Activated CD4-positive, alpha-beta T cell treated with anti-CD3 and anti-CD28 coated beads for 36 hours (primary cell): ENCODE measurements at regions of chr15 and their contacts with region 1.

Region 1: GRCh38 chr15:74460871-74461846 is at the start of gene UBL7:
- DNase-seq: peak; percentile 99
- ATAC-seq: peak; percentile 97
- H3K4me3 Mint-ChIP-seq: peak within 1 kb of the TSS; percentile 96
- H3K27ac Mint-ChIP-seq: peak within 1 kb of the TSS; percentile 97
- H3K4me1 Mint-ChIP-seq: peaks cover 47% of the 10 kb centered on the region
- H3K27me3 Mint-ChIP-seq: no peaks in the 10 kb centered on the region
- total RNA-seq, gene UBL7: 47.5 to 48.6 TPM

Region 2: DNA sequence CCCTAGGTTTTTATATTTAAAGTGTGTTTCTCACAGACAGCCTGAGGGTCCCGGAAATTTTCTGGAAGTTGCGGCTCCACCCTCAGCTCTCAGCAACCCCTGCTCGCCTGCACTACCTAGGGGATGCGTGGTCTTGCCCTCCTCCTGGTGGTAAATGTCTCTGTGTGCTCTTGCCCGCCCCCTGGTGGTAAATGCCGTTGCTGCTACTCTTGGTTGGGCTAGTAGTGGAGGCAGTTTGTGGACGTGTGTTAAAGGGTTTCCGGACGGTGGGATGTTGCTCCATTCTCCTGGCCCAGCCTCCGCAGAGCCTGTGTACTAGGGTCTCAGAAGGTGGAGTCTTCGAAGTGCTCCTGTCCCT is 496.4 kb before region 1 on chr15:
- CTCF ChIA-PET with region 1: no interaction called
- POLR2A ChIA-PET with region 1: no interaction called
- intact Hi-C with region 1: loop called in 1 of 2 experiments (anchors 5 kb)
- DNase-seq: peak; percentile 93
- ATAC-seq: peak; percentile 74
- H3K4me3 Mint-ChIP-seq: peak overlapping the region; percentile 66
- H3K27ac Mint-ChIP-seq: peak overlapping the region; percentile 76
- H3K4me1 Mint-ChIP-seq: peaks cover 27% of the 10 kb centered on the region
- H3K27me3 Mint-ChIP-seq: no peaks in the 10 kb centered on the region

Region 3: GRCh38 chr15:74127260-74127953 is 333.8 kb before region 1 on chr15:
- CTCF ChIA-PET with region 1: no interaction called
- POLR2A ChIA-PET with region 1: no interaction called
- intact Hi-C with region 1: no loop called
- DNase-seq: peak; percentile 94
- ATAC-seq: peak; percentile 96
- H3K4me3 Mint-ChIP-seq: peak overlapping the region; percentile 21
- H3K27ac Mint-ChIP-seq: no peak overlapping the region
- H3K4me1 Mint-ChIP-seq: peaks cover 19% of the 10 kb centered on the region
- H3K27me3 Mint-ChIP-seq: peaks cover 60% of the 10 kb centered on the region

Region 4: GRCh38 chr15:74382004-74382816 is 78.9 kb before region 1 on chr15:
- CTCF ChIA-PET with region 1: interaction called, 3 read pairs
- POLR2A ChIA-PET with region 1: no interaction called
- intact Hi-C with region 1: loop called (anchors 1 to 2 kb)
- DNase-seq: peak; percentile 87
- ATAC-seq: peak; percentile 13
- H3K4me3 Mint-ChIP-seq: no peak overlapping the region
- H3K27ac Mint-ChIP-seq: peak overlapping the region; percentile 97
- H3K4me1 Mint-ChIP-seq: peaks cover 80% of the 10 kb centered on the region
- H3K27me3 Mint-ChIP-seq: no peaks in the 10 kb centered on the region

Region 5: GRCh38 chr15:74438721-74439316 is 22.3 kb before region 1 on chr15:
- CTCF ChIA-PET with region 1: interaction called, 7 read pairs
- POLR2A ChIA-PET with region 1: no interaction called
- intact Hi-C with region 1: loop called in 1 of 2 experiments (anchors 1 kb)
- DNase-seq: peak; percentile 90
- ATAC-seq: peak; percentile 86
- H3K4me3 Mint-ChIP-seq: no peak overlapping the region
- H3K27ac Mint-ChIP-seq: no peak overlapping the region
- H3K4me1 Mint-ChIP-seq: peaks cover 30% of the 10 kb centered on the region
- H3K27me3 Mint-ChIP-seq: no peaks in the 10 kb centered on the region

Region 6: DNA sequence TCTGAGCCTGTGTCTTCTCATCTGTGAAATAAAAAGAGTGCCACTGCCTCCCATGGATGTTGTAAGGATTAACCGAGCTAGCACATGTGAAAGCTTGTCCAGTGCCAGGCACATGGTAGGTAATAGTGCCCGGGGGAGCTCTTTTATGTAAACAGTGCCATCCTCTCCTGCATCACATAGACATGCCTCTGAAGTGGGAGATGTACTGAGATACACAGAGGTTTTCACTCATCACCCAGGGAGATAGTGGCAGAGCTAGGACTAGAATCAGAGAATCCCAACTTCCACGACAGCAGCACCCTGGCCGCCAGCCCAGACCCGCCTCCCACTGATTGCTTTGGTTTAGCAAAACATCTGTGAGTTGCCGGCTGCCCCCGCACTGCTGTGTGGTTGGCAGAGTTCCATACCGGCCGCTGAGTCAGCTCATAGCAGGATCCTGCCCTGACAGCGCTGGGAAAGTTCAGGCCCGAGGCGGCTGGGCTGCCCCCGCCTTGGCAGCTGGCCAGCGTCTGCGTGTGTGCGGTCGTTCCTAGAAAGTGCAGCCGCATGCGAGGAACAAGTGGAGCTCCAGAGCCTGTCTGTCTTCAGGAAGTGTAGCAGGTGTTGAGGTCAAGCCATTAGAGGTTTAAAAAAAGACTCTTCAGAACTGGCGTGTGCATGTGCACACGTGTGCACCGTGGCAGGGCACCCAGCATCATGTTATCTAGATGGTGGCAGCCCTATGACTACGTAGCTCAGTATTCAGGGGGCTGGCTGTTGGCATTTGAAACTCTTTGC is 84.9 kb after region 1 on chr15:
- CTCF ChIA-PET with region 1: interaction called, 13 read pairs
- POLR2A ChIA-PET with region 1: interaction called, 13 read pairs
- intact Hi-C with region 1: loop called in 1 of 2 experiments (anchors 1 kb)
- DNase-seq: peak; percentile 98
- ATAC-seq: peak; percentile 72
- H3K4me3 Mint-ChIP-seq: peak overlapping the region; percentile 29
- H3K27ac Mint-ChIP-seq: peak overlapping the region; percentile 44
- H3K4me1 Mint-ChIP-seq: peaks cover 62% of the 10 kb centered on the region
- H3K27me3 Mint-ChIP-seq: peaks cover 2% of the 10 kb centered on the region

Region 7: GRCh38 chr15:74787251-74788041 is 326.3 kb after region 1 on chr15:
- CTCF ChIA-PET with region 1: interaction called, 3 read pairs
- POLR2A ChIA-PET with region 1: no interaction called
- intact Hi-C with region 1: loop called in 1 of 2 experiments (anchors 5 kb)
- DNase-seq: peak; percentile 97
- ATAC-seq: peak; percentile 74
- H3K4me3 Mint-ChIP-seq: peak overlapping the region; percentile 89
- H3K27ac Mint-ChIP-seq: peak overlapping the region; percentile 100
- H3K4me1 Mint-ChIP-seq: peaks cover 58% of the 10 kb centered on the region
- H3K27me3 Mint-ChIP-seq: no peaks in the 10 kb centered on the region

Region 8: DNA sequence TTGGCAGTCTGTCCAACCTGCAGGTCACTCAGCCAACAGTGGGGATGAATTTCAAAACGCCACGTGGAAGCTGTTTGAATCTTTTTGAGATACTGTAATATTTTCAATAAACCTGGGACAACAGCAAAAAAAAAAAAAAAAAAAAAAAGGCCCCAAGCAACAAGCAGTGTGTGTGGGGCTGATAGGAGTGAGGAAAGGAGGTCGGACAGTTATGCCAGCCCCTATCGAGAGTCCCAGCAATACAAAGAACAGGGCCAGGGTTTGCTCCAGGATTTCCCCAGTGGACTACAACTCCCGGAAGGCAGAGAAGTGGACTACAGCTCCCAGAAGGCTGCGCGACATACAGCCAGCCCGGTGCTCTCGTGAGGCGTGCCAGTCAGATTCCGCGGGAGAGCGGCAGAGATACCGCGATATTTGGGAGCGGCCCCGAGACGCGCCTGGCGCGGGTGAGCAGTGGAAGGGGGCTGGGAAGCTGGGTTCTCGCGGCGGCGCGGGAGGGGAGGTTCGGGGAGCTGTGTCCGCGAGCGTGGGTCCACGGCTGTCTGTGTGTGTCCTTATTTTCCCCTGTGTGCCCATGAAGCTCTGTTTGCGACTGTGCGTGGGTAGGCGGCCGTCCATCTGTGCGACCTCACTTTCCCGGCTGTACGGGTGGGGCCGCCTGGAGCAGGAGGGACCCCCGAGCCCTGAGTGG is 562.2 kb after region 1 on chr15 and contains the start of gene PPCDC:
- CTCF ChIA-PET with region 1: no interaction called
- POLR2A ChIA-PET with region 1: no interaction called
- intact Hi-C with region 1: loop called in 1 of 2 experiments (anchors 2 kb)
- DNase-seq: peak; percentile 97
- ATAC-seq: peak; percentile 100
- H3K4me3 Mint-ChIP-seq: peak within 1 kb of the TSS; percentile 89
- H3K27ac Mint-ChIP-seq: peak within 1 kb of the TSS; percentile 95
- H3K4me1 Mint-ChIP-seq: peaks cover 13% of the 10 kb centered on the region
- H3K27me3 Mint-ChIP-seq: no peaks in the 10 kb centered on the region
- total RNA-seq, gene PPCDC: 23.3 to 24.0 TPM